T-cell (primary cell): ENCODE measurements at regions of chr4 and their contacts with region 1.

Region 1: GRCh38 chr4:26030260-26030667 is 116.2 kb downstream of the SMIM20 start:
- DNase-seq: no peak
- ATAC-seq: no peak
- H3K4me3 ChIP-seq: no peak overlapping the region
- H3K4me3 Mint-ChIP-seq: no peak overlapping the region
- H3K27ac ChIP-seq: no peak overlapping the region
- H3K27ac Mint-ChIP-seq: no peak overlapping the region
- H3K4me1 ChIP-seq: peaks cover 0 to 9% of the 10 kb centered on the region in 2 experiments
- H3K4me1 Mint-ChIP-seq: peaks cover 0 to 2% (median 0%) of the 10 kb centered on the region in 3 donors
- H3K27me3 ChIP-seq: peaks cover 0 to 18% of the 10 kb centered on the region in 2 experiments
- H3K27me3 Mint-ChIP-seq: peaks cover 7 to 14% of the 10 kb centered on the region in 2 donors

Region 2: DNA sequence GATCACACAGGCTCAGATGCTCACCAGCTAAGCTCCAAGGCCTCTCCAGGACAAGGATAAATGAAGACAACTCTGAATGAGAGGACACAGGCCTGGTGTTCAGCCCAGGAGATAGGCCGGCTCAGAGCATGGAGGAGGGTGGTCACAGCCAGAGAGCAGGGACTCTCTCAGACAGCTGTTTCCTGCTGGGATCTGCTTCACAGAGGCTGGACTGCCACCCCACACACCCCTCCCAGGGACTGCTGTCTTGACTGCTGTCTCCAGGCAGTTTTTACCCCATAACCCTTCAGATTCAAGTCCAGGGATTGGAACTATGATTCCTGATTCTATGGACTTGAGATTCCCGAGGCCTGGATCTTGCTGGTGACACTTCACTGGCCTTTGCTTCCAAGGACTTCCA is 27.2 kb before region 1 on chr4:
- CTCF ChIA-PET with region 1: no interaction called
- POLR2A ChIA-PET with region 1: interaction called in 1 of 2 experiments, 11 read pairs
- DNase-seq: no peak
- ATAC-seq: no peak
- H3K4me3 ChIP-seq: no peak overlapping the region
- H3K4me3 Mint-ChIP-seq: no peak overlapping the region
- H3K27ac ChIP-seq: no peak overlapping the region
- H3K27ac Mint-ChIP-seq: no peak overlapping the region
- H3K4me1 ChIP-seq: no peaks in the 10 kb centered on the region
- H3K4me1 Mint-ChIP-seq: no peaks in the 10 kb centered on the region
- H3K27me3 ChIP-seq: peaks cover 0 to 14% of the 10 kb centered on the region in 2 experiments
- H3K27me3 Mint-ChIP-seq: peaks cover 5 to 10% of the 10 kb centered on the region in 2 donors